ENCODE measurements at regions of chr1 and their contacts with region 1.

Region 1: DNA sequence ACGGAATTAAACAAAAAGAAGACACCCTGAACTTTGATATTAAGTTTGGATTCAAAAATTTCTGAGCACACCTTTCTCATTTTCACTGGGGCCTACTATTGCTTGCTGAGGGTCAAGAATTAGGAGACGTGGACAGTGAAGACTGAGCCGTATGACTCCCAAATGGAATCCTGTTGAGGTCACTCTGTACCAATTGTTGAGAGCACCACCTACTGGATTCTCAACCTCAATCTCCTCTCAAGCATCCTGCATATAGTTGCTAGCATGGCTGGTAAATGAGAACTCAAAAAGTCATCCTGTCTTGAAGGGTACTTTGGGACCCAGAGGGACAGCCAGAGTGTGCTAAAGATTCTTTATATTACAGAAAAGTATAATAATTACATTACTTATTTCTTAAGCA is 20.2 kb upstream of the MTR start:
- DNase-seq: no peak
- ATAC-seq: peak; percentile 62 to 70
- H3K4me3 ChIP-seq: no peak overlapping the region
- H3K27ac ChIP-seq: no peak overlapping the region
- H3K4me1 ChIP-seq: no peaks in the 10 kb centered on the region
- H3K27me3 ChIP-seq: no peaks in the 10 kb centered on the region

Region 2: GRCh38 chr1:236603991-236604904 is 170.7 kb before region 1 on chr1 and contains the start of gene HEATR1:
- intact Hi-C with region 1: loop called in 2 of 4 experiments (anchors 10 kb)
- DNase-seq: peak; percentile 95 to 97 (median 97)
- ATAC-seq: peak; percentile 98
- H3K4me3 ChIP-seq: peak within 1 kb of the TSS; percentile 99
- H3K27ac ChIP-seq: peak within 1 kb of the TSS; percentile 92
- H3K4me1 ChIP-seq: no peaks in the 10 kb centered on the region
- H3K27me3 ChIP-seq: no peaks in the 10 kb centered on the region
- total RNA-seq, gene HEATR1: 11.2 to 12.8 (median 12.2) TPM

Region 3: DNA sequence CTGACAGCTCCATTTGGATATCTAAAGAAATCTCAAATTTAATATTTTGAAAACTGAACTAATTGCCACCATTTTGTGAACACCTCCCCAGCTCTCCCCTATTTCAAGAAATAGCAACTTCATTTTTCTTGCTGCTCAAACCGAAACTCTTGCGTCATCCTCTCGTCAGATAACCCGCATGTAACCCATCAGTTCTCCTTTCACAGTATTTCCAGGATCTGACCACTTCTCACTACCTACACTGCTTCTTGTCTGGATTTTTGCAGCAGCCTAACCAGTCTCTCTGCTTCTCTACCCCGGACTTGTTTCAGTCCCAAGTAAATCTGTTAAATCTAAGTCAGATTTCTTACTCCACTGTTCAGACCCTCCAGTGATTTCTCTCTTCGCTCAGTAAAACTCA is 95.8 kb after region 1 on chr1:
- intact Hi-C with region 1: no loop called
- DNase-seq: no peak
- ATAC-seq: peak; percentile 37 to 39
- H3K4me3 ChIP-seq: no peak overlapping the region
- H3K27ac ChIP-seq: no peak overlapping the region
- H3K4me1 ChIP-seq: no peaks in the 10 kb centered on the region
- H3K27me3 ChIP-seq: no peaks in the 10 kb centered on the region

Measured in right cardiac atrium (tissue), 5 donors.